ENCODE measurements at regions of chr4 and their contacts with region 1.

Region 1: DNA sequence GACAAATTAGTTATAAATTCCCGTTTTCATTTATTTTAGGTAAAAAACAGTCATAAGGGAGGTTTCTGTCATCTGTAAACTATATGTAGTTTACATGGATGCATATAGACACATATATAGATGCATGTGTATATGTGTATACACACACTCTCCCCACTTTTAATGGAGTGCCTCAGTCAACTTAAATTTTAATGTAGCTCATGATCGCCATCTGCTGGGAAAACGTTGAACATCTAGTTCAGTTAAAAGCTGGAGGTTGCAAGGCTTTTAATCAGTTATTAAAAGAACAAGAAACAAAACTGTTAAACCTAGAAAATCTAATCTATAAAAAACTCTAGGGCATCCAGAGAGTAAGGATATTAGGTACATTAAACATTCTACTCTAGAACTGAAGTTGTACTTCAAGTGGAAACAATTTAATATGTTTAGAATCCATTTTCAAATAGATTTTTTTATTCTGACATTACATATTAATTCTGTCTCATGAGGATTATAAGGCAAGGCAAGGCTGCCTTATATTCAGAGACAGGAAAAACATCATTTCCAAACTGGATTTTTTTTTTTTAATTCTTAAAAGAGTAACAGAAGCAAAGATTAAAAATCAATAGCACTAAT is 122.6 kb downstream of the SHISA3 start:
- DNase-seq: peak; percentile 21
- H3K4me3 ChIP-seq: no peak overlapping the region
- H3K27ac ChIP-seq: no peak overlapping the region
- H3K4me1 ChIP-seq: no peaks in the 10 kb centered on the region
- H3K27me3 ChIP-seq: no peaks in the 10 kb centered on the region
- CTCF ChIP-seq: peak; percentile 47 to 57

Region 2: DNA sequence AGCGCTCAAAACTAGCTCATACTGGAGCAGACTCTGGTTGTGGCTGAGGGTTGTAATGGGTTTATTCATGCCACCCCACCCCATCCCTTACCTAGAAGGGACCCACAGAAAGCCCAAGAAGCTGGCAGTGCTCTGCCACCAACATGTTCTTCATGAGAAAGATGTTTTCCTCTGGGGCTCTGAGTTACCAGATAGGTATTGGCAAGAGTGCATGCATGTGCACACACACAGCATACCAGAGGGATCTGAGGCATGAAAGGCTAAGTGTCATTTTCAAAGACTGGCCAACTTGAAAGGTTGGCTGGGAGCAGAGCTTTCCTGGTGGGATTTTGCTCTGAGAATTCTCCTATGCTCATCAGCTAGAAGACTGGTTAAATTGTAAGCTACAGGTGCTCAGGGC is 836.6 kb before region 1 on chr4:
- CTCF ChIA-PET with region 1: no interaction called
- dilution Hi-C with region 1: no loop called
- in situ Hi-C with region 1: loop called in 1 of 2 experiments (anchors 10 kb)
- intact Hi-C with region 1: no loop called
- DNase-seq: no peak
- H3K4me3 ChIP-seq: no peak overlapping the region
- H3K27ac ChIP-seq: no peak overlapping the region
- H3K4me1 ChIP-seq: no peaks in the 10 kb centered on the region
- H3K27me3 ChIP-seq: peaks cover 3% of the 10 kb centered on the region
- CTCF ChIP-seq: no peak

Region 3: GRCh38 chr4:41882625-41883347 is 637.1 kb before region 1 on chr4:
- CTCF ChIA-PET with region 1: no interaction called
- dilution Hi-C with region 1: no loop called
- in situ Hi-C with region 1: no loop called
- intact Hi-C with region 1: loop called (anchors 10 kb)
- DNase-seq: peak; percentile 21
- H3K4me3 ChIP-seq: no peak overlapping the region
- H3K27ac ChIP-seq: no peak overlapping the region
- H3K4me1 ChIP-seq: peaks cover 12% of the 10 kb centered on the region
- H3K27me3 ChIP-seq: peaks cover 54% of the 10 kb centered on the region
- CTCF ChIP-seq: peak; percentile 69 to 94

Region 4: DNA sequence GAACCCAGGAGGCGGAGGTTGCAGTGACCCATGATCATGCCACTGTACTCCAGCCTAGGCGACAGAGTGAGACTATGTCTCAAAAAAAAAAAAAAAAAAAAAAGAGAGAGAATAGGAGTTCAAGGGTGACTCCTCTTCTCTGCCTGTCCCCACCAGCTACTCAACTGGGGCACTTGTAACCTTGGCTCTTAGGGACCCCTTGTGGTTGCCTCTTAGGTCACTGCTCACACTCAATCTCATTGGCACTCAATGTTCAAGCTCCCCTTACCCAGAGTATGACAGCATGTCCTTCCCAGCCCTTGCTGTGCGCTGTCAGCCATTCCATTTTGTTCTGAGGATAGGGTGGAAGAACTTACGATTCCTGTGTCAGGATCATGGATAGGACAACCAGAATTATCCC is 285.1 kb before region 1 on chr4:
- CTCF ChIA-PET with region 1: no interaction called
- dilution Hi-C with region 1: no loop called
- in situ Hi-C with region 1: no loop called
- intact Hi-C with region 1: no loop called
- DNase-seq: no peak
- H3K4me3 ChIP-seq: no peak overlapping the region
- H3K27ac ChIP-seq: no peak overlapping the region
- H3K4me1 ChIP-seq: no peaks in the 10 kb centered on the region
- H3K27me3 ChIP-seq: no peaks in the 10 kb centered on the region
- CTCF ChIP-seq: no peak

Region 5: GRCh38 chr4:42282081-42282901 is 237.6 kb before region 1 on chr4:
- CTCF ChIA-PET with region 1: no interaction called
- dilution Hi-C with region 1: no loop called
- in situ Hi-C with region 1: loop called in 1 of 2 experiments (anchors 10 kb)
- intact Hi-C with region 1: loop called (anchors 1 kb)
- DNase-seq: peak; percentile 37
- H3K4me3 ChIP-seq: no peak overlapping the region
- H3K27ac ChIP-seq: no peak overlapping the region
- H3K4me1 ChIP-seq: peaks cover 6% of the 10 kb centered on the region
- H3K27me3 ChIP-seq: no peaks in the 10 kb centered on the region
- CTCF ChIP-seq: peak; percentile 65 to 72

Region 6: GRCh38 chr4:42371306-42372252 is 148.3 kb before region 1 on chr4:
- CTCF ChIA-PET with region 1: interaction called, 8 read pairs
- dilution Hi-C with region 1: no loop called
- in situ Hi-C with region 1: no loop called
- intact Hi-C with region 1: loop called (anchors 1 kb)
- DNase-seq: peak; percentile 9
- H3K4me3 ChIP-seq: no peak overlapping the region
- H3K27ac ChIP-seq: no peak overlapping the region
- H3K4me1 ChIP-seq: no peaks in the 10 kb centered on the region
- H3K27me3 ChIP-seq: no peaks in the 10 kb centered on the region
- CTCF ChIP-seq: peak; percentile 36 to 60

Region 7: DNA sequence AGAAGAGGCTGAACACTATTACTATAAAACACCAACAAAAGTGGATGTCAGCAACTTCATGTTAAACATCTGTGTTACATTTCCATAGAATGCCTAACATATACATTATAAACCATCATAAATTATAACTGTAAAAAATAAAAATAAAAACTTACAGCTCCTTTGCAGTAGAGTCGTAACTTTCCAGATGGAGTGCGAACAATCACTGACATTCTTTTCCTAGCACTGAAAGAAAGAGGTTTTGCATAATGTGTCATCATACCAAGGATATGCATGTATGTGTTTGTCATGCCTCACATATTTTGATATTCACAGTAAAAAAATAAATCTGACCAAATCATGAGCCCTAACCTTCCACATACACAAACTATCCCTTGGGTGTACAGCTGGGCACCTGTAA is 23.9 kb after region 1 on chr4:
- CTCF ChIA-PET with region 1: no interaction called
- dilution Hi-C with region 1: no loop called
- in situ Hi-C with region 1: no loop called
- intact Hi-C with region 1: no loop called
- DNase-seq: no peak
- H3K4me3 ChIP-seq: no peak overlapping the region
- H3K27ac ChIP-seq: no peak overlapping the region
- H3K4me1 ChIP-seq: no peaks in the 10 kb centered on the region
- H3K27me3 ChIP-seq: no peaks in the 10 kb centered on the region
- CTCF ChIP-seq: no peak